A549 (cell line): ENCODE measurements at regions of chr17 and their contacts with region 1.

Region 1: DNA sequence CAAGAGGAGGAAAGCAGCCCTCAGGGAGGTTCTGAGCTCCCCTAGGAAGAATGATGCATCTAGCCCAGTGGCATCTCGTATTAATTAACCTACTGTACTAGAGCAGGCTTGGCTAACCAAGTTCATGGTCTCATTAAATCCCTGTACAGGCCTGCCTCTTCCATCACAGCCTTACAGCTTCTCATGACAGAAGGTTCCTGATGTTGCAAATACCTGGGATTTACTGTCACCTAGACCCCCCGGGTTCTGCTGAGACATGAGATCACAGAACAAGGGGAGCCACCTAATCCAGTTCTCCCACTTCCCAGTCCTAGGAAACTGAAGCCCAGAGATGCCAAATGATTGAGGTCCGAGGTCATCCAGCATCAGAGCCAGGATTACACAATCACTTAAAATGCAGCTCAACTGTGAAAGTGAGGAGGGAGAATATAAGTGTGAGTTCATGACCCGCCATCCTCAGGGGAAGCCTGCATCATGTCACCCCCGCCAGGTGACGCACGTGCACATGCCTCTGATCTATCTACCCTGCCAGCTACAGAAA is 23.9 kb downstream of the ACLY start:
- DNase-seq: peak in 1 of 2 experiments; percentile 57
- ATAC-seq: peak; percentile 46 to 48
- H3K4me3 ChIP-seq: no peak overlapping the region
- H3K27ac ChIP-seq: peak overlapping the region; percentile 67 to 81
- H3K4me1 ChIP-seq: peaks cover 80% of the 10 kb centered on the region
- CTCF ChIP-seq: no peak
- EP300 ChIP-seq: no peak
- POLR2A ChIP-seq: no peak
- RAD21 ChIP-seq: 0 out of 5 replicates have a peak, but pooled peaks of 1 of the 2 experiments have one; percentile 26

Region 2: DNA sequence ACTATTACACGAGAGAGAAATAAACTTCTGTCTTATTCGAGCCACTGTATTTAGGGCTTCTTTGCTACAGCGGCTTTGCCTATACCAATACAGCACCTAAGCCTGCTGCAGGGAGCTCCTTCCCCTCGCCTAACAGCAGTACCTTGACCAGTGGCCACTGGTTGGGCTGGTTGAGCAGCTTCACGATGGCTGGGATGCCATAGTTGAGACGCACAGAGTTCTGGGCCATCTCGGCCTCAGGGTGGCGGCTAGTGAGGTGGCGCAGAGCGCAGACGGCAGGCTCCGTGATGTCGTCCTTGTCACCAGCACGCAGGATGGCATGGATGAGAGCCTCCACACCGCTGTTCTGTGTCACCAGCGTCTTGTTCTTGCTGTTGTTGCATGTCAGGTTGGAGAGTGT is 132.0 kb before region 1 on chr17:
- CTCF ChIA-PET with region 1: no interaction called
- POLR2A ChIA-PET with region 1: no interaction called
- DNase-seq: no peak
- ATAC-seq: no peak
- H3K4me3 ChIP-seq: no peak overlapping the region
- H3K27ac ChIP-seq: no peak overlapping the region
- H3K4me1 ChIP-seq: no peaks in the 10 kb centered on the region
- CTCF ChIP-seq: no peak
- EP300 ChIP-seq: no peak
- POLR2A ChIP-seq: no peak
- RAD21 ChIP-seq: no peak

Region 3: GRCh38 chr17:41910701-41911391 is 16.0 kb after region 1 on chr17:
- CTCF ChIA-PET with region 1: interaction called, 62 read pairs
- POLR2A ChIA-PET with region 1: interaction called, 12 read pairs
- DNase-seq: peak; percentile 97 to 98
- ATAC-seq: peak; percentile 68 to 77
- H3K4me3 ChIP-seq: no peak overlapping the region
- H3K27ac ChIP-seq: peak overlapping the region; percentile 93 to 96
- H3K4me1 ChIP-seq: peaks cover 100% of the 10 kb centered on the region
- CTCF ChIP-seq: peak; percentile 13; the same call in 1 of the 3 replicates
- EP300 ChIP-seq: peak; percentile 37 to 63; a peak in 2 of 5 replicates
- POLR2A ChIP-seq: no peak
- RAD21 ChIP-seq: peak; percentile 20 to 49; a peak in 3 of 5 replicates

Region 4: GRCh38 chr17:41959336-41960095 is 64.7 kb after region 1 on chr17:
- CTCF ChIA-PET with region 1: interaction called, 10 read pairs
- POLR2A ChIA-PET with region 1: interaction called, 4 read pairs
- DNase-seq: peak; percentile 76 to 82
- ATAC-seq: peak; percentile 79 to 89
- H3K4me3 ChIP-seq: no peak overlapping the region
- H3K27ac ChIP-seq: peak overlapping the region in 1 of 2 experiments; percentile 72; a peak in 3 of 6 replicates
- H3K4me1 ChIP-seq: peaks cover 7% of the 10 kb centered on the region; the same call in 2 of the 3 replicates
- CTCF ChIP-seq: peak; percentile 84
- EP300 ChIP-seq: no peak
- POLR2A ChIP-seq: no peak
- RAD21 ChIP-seq: peak; percentile 88 to 94

Region 5: DNA sequence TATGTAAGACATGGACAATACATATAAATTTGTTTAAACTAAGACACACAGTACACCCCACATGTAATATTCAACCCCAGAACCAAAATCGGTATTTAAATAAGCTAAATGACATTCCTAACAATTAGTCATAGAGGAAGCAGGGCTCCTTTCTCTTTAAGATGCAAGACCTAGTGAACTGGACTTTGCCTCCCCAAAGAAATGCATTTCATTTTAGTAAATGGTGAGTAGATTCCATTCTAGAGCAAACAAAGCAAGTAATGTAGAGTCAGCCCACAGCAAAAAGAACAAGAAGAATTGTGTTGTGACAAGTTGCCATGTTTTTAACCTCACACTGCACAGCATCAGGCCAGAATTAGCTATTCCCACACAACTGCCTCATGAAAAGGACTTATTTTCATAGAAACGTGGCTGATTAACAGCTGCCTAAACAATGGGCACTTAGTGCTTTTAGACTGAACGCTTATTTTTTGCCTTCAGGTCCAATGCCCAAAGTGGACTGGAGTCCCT is 108.0 kb after region 1 on chr17:
- CTCF ChIA-PET with region 1: no interaction called
- POLR2A ChIA-PET with region 1: no interaction called
- DNase-seq: peak in 1 of 2 experiments; percentile 64
- ATAC-seq: peak; percentile 70 to 86; a peak in 5 of 6 replicates
- H3K4me3 ChIP-seq: peak overlapping the region; percentile 20; the same call in 2 of the 3 replicates
- H3K27ac ChIP-seq: peak overlapping the region; percentile 61 to 84
- H3K4me1 ChIP-seq: peaks cover 46% of the 10 kb centered on the region
- CTCF ChIP-seq: no peak
- EP300 ChIP-seq: no peak
- POLR2A ChIP-seq: no peak
- RAD21 ChIP-seq: no peak